ENCODE measurements at regions of chr4 and their contacts with region 1.

Region 1: GRCh38 chr4:159206427-159206871 is 103.6 kb downstream of the RAPGEF2 start:
- DNase-seq: no peak
- ATAC-seq: no peak
- H3K4me3 ChIP-seq: no peak overlapping the region
- H3K27ac ChIP-seq: no peak overlapping the region
- H3K4me1 ChIP-seq: peaks cover 0 to 8% of the 10 kb centered on the region in 2 donors
- H3K27me3 ChIP-seq: no peaks in the 10 kb centered on the region

Region 2: GRCh38 chr4:158722917-158723793 is 483.3 kb before region 1 on chr4 and contains the start of gene PPID:
- intact Hi-C with region 1: loop called (anchors 5 to 10 kb)
- DNase-seq: peak; percentile 88 to 95
- ATAC-seq: peak; percentile 97
- H3K4me3 ChIP-seq: peak within 1 kb of the TSS; percentile 63 to 89
- H3K27ac ChIP-seq: peak within 1 kb of the TSS in 1 of 2 donors; percentile 83
- H3K4me1 ChIP-seq: peaks cover 0 to 3% of the 10 kb centered on the region in 2 donors
- H3K27me3 ChIP-seq: no peaks in the 10 kb centered on the region
- total RNA-seq, gene PPID: 14.2 to 19.7 TPM

Region 3: GRCh38 chr4:159358226-159358625 is 151.8 kb after region 1 on chr4:
- intact Hi-C with region 1: no loop called
- DNase-seq: no peak
- ATAC-seq: peak; percentile 62
- H3K4me3 ChIP-seq: no peak overlapping the region
- H3K27ac ChIP-seq: no peak overlapping the region
- H3K4me1 ChIP-seq: peaks cover 0 to 3% of the 10 kb centered on the region in 2 donors
- H3K27me3 ChIP-seq: no peaks in the 10 kb centered on the region

Region 4: GRCh38 chr4:159446266-159446976 is 240.0 kb after region 1 on chr4:
- intact Hi-C with region 1: loop called (anchors 10 kb)
- DNase-seq: no peak
- ATAC-seq: peak; percentile 94
- H3K4me3 ChIP-seq: no peak overlapping the region
- H3K27ac ChIP-seq: no peak overlapping the region
- H3K4me1 ChIP-seq: no peaks in the 10 kb centered on the region
- H3K27me3 ChIP-seq: no peaks in the 10 kb centered on the region